ENCODE measurements at regions of chr12 and their contacts with region 1.

Region 1: DNA sequence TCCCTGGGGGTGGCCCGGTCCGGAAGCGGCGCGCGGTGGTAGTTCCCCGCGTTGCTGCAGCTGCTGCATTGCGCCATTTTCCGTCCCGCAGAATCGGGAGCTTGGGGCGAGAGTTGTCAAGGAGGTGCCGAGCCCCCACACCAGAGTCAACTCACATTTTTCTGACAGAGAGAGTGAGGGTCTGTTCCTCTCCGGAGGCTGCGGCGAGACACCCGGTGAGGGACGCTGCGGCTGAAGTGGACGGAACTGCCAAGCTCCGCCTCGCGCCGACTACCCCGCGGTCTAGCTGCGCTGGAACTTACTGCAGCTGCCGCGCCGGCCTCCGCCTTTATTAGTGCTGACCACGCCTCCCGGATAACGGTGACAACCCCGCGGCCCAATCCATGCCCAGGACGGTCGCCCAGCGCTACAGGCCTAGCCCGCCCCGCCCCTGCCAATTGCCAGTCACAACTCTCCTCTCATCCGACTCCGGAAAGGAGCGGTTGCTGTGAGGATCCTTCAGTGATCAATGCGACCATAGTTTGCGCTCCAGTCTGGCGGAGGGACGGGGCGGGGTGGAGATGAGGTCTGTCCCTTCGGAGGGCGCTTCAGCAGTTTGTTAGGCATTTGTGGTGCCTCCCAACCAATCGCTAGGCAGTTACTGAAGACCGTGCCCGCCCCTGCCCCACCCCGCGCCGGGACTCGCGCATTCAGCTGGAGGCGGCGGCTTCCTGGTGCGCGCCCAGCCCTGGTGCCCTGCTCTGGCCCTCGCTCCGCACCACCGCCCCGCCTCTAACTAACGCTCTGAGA is at the start of gene VAMP1:
- DNase-seq: peak; percentile 98
- H3K4me3 ChIP-seq: peak within 1 kb of the TSS; percentile 57 to 86
- H3K27ac ChIP-seq: peak within 1 kb of the TSS; percentile 84 to 87
- H3K4me1 ChIP-seq: peaks cover 3% of the 10 kb centered on the region
- H3K27me3 ChIP-seq: no peaks in the 10 kb centered on the region
- CTCF ChIP-seq: peak in 2 of 4 experiments; percentile 29 to 42
- POLR2A ChIP-seq: peak; percentile 99
- total RNA-seq, gene VAMP1: 6.3 to 8.5 TPM

Region 2: DNA sequence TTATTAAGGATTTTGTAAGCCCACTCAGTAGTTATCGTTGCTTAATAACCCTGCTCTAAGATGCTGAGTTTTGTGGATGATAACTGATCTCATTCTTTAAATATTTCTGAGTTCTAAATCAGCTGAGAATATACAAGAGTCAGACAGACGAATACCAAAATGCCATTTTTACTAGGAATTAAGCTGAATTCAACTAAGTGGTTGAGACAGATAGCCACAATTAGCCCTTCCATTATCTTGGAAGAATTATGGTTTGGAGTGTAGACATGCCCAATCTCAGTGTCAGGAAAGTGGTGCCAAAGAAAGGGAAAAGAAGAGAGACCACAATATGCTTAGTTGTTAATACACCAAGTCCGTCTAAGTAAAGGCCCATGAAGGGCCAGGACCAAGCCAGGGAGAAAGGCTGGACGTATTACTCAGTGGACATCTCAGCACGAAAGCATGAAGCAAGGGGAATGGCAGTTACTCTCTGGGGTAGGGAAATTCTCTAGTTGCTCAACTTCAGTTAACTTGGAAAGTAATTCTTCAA is 1368.2 kb before region 1 on chr12:
- intact Hi-C with region 1: no loop called
- DNase-seq: no peak
- H3K4me3 ChIP-seq: no peak overlapping the region
- H3K27ac ChIP-seq: no peak overlapping the region
- H3K4me1 ChIP-seq: no peaks in the 10 kb centered on the region
- H3K27me3 ChIP-seq: no peaks in the 10 kb centered on the region
- CTCF ChIP-seq: no peak
- POLR2A ChIP-seq: no peak

Region 3: DNA sequence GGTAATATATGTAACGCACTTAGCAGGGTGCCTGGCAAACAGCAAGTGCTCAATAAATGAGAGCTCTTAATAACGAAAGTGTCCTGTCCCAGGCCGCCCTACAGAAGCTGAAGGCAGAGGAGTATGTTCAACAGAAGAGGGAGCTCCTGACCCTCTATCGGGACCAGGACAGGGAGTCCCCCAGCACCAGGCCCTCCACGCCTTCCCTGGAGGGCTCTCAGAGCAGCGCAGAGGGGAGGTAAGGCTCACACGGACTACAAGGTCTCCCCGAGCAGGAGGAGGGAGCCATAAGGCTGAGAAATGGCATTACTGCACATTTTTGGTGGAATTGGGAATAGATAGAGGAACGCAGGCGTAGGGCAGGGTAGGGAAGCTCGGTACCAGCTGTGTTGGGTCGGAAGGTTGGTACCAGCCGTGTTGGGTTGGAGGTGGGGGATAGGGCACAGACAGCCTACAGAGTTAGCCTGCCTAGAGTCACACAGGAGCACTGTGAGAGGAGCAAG is 144.2 kb before region 1 on chr12:
- intact Hi-C with region 1: loop called (anchors 2 kb)
- DNase-seq: no peak
- H3K4me3 ChIP-seq: no peak overlapping the region
- H3K27ac ChIP-seq: peak overlapping the region; percentile 29 to 61
- H3K4me1 ChIP-seq: peaks cover 18% of the 10 kb centered on the region
- H3K27me3 ChIP-seq: no peaks in the 10 kb centered on the region
- CTCF ChIP-seq: peak in 3 of 4 experiments; percentile 36 to 55 (median 46)
- POLR2A ChIP-seq: no peak

Region 4: DNA sequence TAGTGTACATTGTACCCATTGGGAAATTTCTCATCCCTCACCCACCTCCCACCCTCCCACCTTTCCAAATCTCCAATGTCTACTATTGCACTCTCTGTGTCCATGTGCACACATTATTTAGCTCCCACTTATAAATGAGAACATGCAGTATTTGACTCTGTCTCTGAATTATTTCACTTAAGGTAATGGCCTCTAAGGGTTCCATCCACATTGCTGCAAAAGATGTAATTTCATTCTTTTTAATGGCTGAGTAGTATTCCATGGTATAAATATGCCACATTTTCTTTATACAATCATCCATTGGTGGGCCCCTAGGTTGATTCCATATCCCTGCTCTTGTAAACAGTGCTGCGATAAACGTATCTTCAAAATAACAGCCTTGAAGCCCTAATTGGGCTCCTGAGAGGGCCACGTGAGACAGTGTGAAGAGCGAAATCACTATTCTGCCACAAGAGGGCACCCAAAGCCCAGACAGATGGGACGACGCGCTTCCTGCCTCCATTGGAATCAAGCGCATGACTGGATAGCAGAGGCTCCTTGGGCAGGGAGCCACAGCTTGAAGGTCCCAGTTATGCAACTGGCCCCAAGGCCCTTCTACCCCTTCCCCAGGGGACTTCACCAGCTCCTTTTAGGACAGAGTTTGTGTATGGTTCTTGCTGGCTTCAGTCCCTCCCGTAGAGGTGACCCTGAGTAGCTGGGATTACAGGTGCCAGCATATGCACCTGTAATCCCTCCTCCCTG is 47.1 kb before region 1 on chr12:
- intact Hi-C with region 1: loop called (anchors 2 kb)
- DNase-seq: peak; percentile 86
- H3K4me3 ChIP-seq: no peak overlapping the region
- H3K27ac ChIP-seq: no peak overlapping the region
- H3K4me1 ChIP-seq: no peaks in the 10 kb centered on the region
- H3K27me3 ChIP-seq: no peaks in the 10 kb centered on the region
- CTCF ChIP-seq: peak; percentile 80 to 94 (median 92)
- POLR2A ChIP-seq: no peak

Region 5: GRCh38 chr12:6507102-6507998 is 36.8 kb after region 1 on chr12:
- intact Hi-C with region 1: no loop called
- DNase-seq: no peak
- H3K4me3 ChIP-seq: no peak overlapping the region
- H3K27ac ChIP-seq: peak overlapping the region in 1 of 2 donors; percentile 23
- H3K4me1 ChIP-seq: no peaks in the 10 kb centered on the region
- H3K27me3 ChIP-seq: no peaks in the 10 kb centered on the region
- CTCF ChIP-seq: no peak
- POLR2A ChIP-seq: no peak

Region 6: GRCh38 chr12:6533923-6534694 is 63.5 kb after region 1 on chr12 and contains the start of gene GAPDH:
- intact Hi-C with region 1: loop called (anchors 1 kb)
- DNase-seq: peak; percentile 93
- H3K4me3 ChIP-seq: peak within 1 kb of the TSS; percentile 67 to 90
- H3K27ac ChIP-seq: peak within 1 kb of the TSS; percentile 90 to 93
- H3K4me1 ChIP-seq: peaks cover 12% of the 10 kb centered on the region
- H3K27me3 ChIP-seq: no peaks in the 10 kb centered on the region
- CTCF ChIP-seq: peak in 2 of 4 experiments; percentile 8 to 15
- POLR2A ChIP-seq: peak; percentile 87
- total RNA-seq, gene GAPDH: 1,469 to 2,105 TPM

Region 7: GRCh38 chr12:6554168-6555017 is 83.8 kb after region 1 on chr12:
- intact Hi-C with region 1: loop called (anchors 5 kb)
- DNase-seq: peak; percentile 50
- H3K4me3 ChIP-seq: peak overlapping the region; percentile 42 to 48
- H3K27ac ChIP-seq: peak overlapping the region; percentile 50 to 54
- H3K4me1 ChIP-seq: peaks cover 11% of the 10 kb centered on the region
- H3K27me3 ChIP-seq: no peaks in the 10 kb centered on the region
- CTCF ChIP-seq: peak; percentile 10 to 54 (median 37)
- POLR2A ChIP-seq: no peak

Measured in prostate gland (tissue), 2 donors.